Activated CD4-positive, alpha-beta T cell treated with anti-CD3 and anti-CD28 coated beads for 36 hours (primary cell): ENCODE measurements at regions of chr14 and their contacts with region 1.

Region 1: DNA sequence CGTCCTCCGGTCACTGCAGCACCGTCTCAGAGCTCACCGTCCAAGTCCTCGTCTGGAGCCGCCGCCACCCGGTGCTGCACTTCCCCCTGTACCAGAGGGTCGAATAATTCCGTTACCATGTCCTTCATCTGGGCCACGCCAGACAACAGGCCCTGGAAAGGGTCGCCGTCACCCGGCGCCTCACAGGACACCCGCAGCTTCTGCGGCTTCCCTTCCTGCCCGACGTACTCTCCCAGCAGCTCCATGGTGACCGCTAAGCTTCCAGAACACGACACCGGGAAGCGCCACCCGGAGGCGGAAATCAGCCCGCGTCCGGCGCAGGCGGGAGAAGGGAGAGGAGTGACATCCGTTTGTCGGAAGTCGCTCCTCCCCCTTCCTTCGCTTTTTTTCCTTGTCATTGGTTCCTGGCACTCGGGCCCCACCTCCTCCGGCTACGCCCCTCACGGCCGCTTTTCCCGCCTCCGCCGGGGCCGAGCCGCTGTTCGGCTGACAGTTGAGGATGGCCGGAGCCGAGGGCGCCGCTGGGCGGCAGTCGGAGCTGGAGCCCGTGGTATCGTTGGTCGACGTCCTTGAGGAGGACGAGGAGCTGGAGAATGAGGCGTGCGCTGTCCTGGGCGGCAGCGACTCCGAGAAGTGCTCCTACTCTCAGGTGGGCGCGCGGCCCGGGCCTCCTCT is at the starts of genes GON7 and UBR7:
- DNase-seq: peak; percentile 94
- ATAC-seq: peak; percentile 94
- H3K4me3 Mint-ChIP-seq: peak within 1 kb of the TSS; percentile 96
- H3K27ac Mint-ChIP-seq: peak within 1 kb of the TSS; percentile 97
- H3K4me1 Mint-ChIP-seq: peaks cover 35% of the 10 kb centered on the region
- H3K27me3 Mint-ChIP-seq: no peaks in the 10 kb centered on the region
- total RNA-seq, gene GON7: 9.9 to 12.9 TPM
- total RNA-seq, gene UBR7: 36.5 to 39.9 TPM

Region 2: GRCh38 chr14:92645872-92646478 is 561.0 kb before region 1 on chr14:
- CTCF ChIA-PET with region 1: no interaction called
- POLR2A ChIA-PET with region 1: interaction called, 15 read pairs
- intact Hi-C with region 1: no loop called
- DNase-seq: no peak
- ATAC-seq: no peak
- H3K4me3 Mint-ChIP-seq: no peak overlapping the region
- H3K27ac Mint-ChIP-seq: peak overlapping the region; percentile 14
- H3K4me1 Mint-ChIP-seq: peaks cover 59% of the 10 kb centered on the region
- H3K27me3 Mint-ChIP-seq: no peaks in the 10 kb centered on the region

Region 3: DNA sequence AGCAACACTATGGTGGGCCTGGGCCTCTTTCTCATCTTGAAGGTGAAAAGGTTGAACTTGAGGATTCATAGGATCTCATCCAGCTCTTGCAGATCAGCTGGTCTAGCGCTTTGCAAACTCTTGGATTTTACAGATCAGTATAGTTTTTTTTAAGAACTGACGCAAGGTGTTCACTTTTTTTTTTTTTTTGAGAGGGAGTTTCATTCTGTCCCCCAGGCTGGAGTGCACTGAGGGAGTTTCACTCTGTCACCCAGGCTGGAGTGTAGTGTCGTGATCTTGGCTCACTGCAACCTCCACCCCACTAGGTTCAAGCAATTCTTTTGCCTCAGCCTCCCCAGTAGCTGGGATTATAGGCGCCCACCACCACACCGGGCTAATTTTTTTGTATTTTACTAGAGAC is 438.1 kb before region 1 on chr14:
- CTCF ChIA-PET with region 1: no interaction called
- POLR2A ChIA-PET with region 1: no interaction called
- intact Hi-C with region 1: no loop called
- DNase-seq: no peak
- ATAC-seq: no peak
- H3K4me3 Mint-ChIP-seq: no peak overlapping the region
- H3K27ac Mint-ChIP-seq: no peak overlapping the region
- H3K4me1 Mint-ChIP-seq: peaks cover 16% of the 10 kb centered on the region
- H3K27me3 Mint-ChIP-seq: no peaks in the 10 kb centered on the region

Region 4: DNA sequence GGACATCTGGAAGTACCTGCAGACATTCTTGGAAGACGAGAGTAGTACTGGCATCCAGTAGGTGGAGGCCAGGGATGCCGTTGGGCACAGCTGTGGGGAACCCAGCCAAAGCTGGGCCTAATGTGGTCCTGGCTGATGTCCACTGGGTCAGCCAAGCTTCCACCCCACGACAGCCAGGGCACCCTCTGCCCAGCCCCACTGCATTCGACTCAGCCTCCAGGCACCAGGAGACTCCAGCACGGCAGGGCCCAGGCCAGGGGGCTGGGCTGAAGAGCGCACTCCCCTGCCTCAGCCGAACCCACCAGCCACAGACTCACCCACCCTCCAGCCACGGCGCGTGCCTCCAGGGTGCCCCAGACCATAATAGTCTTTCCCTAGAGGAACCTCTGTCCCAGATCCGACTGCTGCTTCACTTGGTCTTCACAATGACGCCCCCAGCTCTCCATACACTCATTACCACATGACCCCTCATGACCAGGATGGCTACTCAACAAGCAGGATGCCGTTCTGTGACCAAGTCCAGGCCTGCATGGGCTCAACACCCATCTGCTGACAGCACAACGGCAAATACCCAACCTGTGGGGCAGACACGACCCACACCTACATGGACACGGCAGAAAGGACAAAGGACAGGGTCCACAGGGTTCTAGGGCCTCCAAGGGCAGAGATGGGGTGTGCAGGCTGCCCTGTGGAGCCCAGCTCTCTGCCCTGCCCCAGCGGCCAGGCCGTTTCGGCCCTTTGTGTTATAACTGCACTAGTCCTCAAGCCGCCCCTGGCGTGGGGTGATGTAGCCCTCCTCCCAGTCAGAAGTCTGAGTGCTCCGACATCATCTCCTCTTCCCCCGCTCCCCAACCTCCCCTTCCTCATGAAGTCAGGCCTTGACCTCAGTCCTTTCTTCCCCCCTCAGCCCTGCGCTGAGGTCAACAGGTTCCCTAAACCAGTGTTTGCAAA is 114.0 kb before region 1 on chr14:
- CTCF ChIA-PET with region 1: no interaction called
- POLR2A ChIA-PET with region 1: no interaction called
- intact Hi-C with region 1: no loop called
- DNase-seq: no peak
- ATAC-seq: no peak
- H3K4me3 Mint-ChIP-seq: no peak overlapping the region
- H3K27ac Mint-ChIP-seq: no peak overlapping the region
- H3K4me1 Mint-ChIP-seq: no peaks in the 10 kb centered on the region
- H3K27me3 Mint-ChIP-seq: no peaks in the 10 kb centered on the region

Region 5: GRCh38 chr14:93184388-93185353 is 22.3 kb before region 1 on chr14 and contains the starts of genes LYSET and MOAP1:
- CTCF ChIA-PET with region 1: interaction called, 19 read pairs
- POLR2A ChIA-PET with region 1: interaction called, 18 read pairs
- intact Hi-C with region 1: loop called (anchors 1 kb)
- DNase-seq: peak; percentile 95
- ATAC-seq: peak; percentile 90
- H3K4me3 Mint-ChIP-seq: peak within 1 kb of the TSS; percentile 91
- H3K27ac Mint-ChIP-seq: peak within 1 kb of the TSS; percentile 93
- H3K4me1 Mint-ChIP-seq: peaks cover 40% of the 10 kb centered on the region
- H3K27me3 Mint-ChIP-seq: no peaks in the 10 kb centered on the region
- total RNA-seq, gene LYSET: 9.9 to 10.2 TPM
- total RNA-seq, gene MOAP1: 11.7 to 15.9 TPM